ENCODE measurements at regions of chr16 and their contacts with region 1.

Region 1: GRCh38 chr16:4200000-4200780 is 41.7 kb downstream of the SRL start:
- DNase-seq: peak; percentile 73 to 88
- H3K4me3 ChIP-seq: no peak overlapping the region
- H3K27ac ChIP-seq: no peak overlapping the region
- H3K4me1 ChIP-seq: peaks cover 7% of the 10 kb centered on the region
- H3K27me3 ChIP-seq: no peaks in the 10 kb centered on the region
- CTCF ChIP-seq: peak; percentile 70

Region 2: DNA sequence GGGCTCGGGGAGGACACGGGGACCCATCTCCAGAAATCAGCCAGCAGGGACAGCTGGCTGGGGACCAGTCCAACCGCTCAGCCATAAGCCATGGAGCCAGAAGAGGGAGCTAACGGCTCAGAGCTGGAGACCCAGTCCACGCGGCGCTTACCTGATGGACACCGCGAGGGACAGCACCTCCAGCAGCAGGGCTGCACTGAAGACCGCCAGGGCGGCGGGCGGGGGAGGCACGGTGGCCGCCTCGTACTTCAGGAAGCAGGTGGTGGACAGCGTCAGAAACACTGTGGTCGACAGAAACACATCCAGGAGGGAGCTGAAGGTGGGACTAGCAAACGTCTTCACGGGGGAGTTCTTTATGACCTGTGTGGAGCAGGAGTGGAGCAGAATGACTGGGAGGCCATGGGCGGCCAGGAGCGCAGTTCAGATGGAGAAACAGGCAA is 217.1 kb before region 1 on chr16:
- CTCF ChIA-PET with region 1: interaction called, 7 read pairs
- POLR2A ChIA-PET with region 1: interaction called, 3 read pairs
- intact Hi-C with region 1: loop called (anchors 5 kb)
- DNase-seq: peak; percentile 64 to 91
- H3K4me3 ChIP-seq: no peak overlapping the region
- H3K27ac ChIP-seq: no peak overlapping the region
- H3K4me1 ChIP-seq: no peaks in the 10 kb centered on the region
- H3K27me3 ChIP-seq: no peaks in the 10 kb centered on the region
- CTCF ChIP-seq: peak; percentile 82

Region 3: GRCh38 chr16:4159726-4160125 is 40.5 kb before region 1 on chr16:
- CTCF ChIA-PET with region 1: no interaction called
- POLR2A ChIA-PET with region 1: no interaction called
- intact Hi-C with region 1: no loop called
- DNase-seq: no peak
- H3K4me3 ChIP-seq: no peak overlapping the region
- H3K27ac ChIP-seq: no peak overlapping the region
- H3K4me1 ChIP-seq: no peaks in the 10 kb centered on the region
- H3K27me3 ChIP-seq: 0 out of 2 replicates have a peak, but pooled peaks cover 6% of the 10 kb centered on the region
- CTCF ChIP-seq: no peak

Region 4: GRCh38 chr16:4214215-4214621 is 14.0 kb after region 1 on chr16:
- CTCF ChIA-PET with region 1: interaction called, 10 read pairs
- POLR2A ChIA-PET with region 1: no interaction called
- intact Hi-C with region 1: no loop called
- DNase-seq: peak; percentile 52 to 93
- H3K4me3 ChIP-seq: no peak overlapping the region
- H3K27ac ChIP-seq: peak overlapping the region; percentile 72
- H3K4me1 ChIP-seq: peaks cover 23% of the 10 kb centered on the region
- H3K27me3 ChIP-seq: no peaks in the 10 kb centered on the region
- CTCF ChIP-seq: no peak

Region 5: DNA sequence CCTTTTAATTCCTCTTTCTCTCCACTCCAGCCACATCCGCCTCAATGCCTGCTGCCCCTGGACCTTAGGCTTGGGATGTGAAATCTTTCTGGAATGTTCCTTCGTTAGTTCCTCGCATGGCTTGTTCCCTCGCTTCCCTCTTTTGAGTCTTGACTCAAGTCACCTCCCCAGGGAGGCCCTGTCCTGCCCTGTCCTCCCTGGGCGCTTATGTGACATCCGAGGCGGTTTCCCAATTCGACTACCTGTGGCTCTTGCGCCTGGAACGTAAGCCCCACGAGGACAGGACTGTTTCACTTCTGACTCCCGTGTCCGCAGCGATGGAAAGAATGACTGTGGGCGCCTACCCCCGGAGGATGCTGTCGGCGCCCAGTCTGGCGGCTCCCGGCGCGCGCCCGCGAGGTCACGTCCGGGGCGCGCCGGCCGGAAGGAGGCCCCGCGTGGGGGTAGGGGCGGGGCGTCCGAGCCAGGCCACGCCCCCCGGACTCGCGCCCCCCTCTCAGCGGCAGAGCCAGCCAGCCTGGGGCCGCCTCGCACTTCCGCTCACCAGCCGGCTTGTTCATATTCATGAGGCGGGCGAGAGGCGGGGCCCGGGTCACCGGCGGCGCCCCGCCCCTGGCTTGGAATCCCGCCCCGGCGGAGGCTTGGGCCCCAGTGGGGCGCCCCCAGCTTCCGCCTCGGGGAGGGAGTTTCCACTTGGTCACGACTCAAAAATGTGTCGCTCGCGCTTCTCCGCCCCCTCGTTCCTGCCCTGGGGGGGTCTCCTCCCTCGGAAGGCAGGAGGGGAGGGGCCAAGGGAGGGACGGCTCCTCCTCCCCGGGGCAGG is 107.2 kb after region 1 on chr16:
- CTCF ChIA-PET with region 1: no interaction called
- POLR2A ChIA-PET with region 1: no interaction called
- intact Hi-C with region 1: no loop called
- DNase-seq: peak; percentile 86 to 99
- H3K4me3 ChIP-seq: peak overlapping the region; percentile 87
- H3K27ac ChIP-seq: peak overlapping the region; percentile 26; the same call in 1 of the 2 replicates
- H3K4me1 ChIP-seq: peaks cover 26% of the 10 kb centered on the region
- H3K27me3 ChIP-seq: no peaks in the 10 kb centered on the region
- CTCF ChIP-seq: no peak

Region 6: GRCh38 chr16:4330277-4330874 is 130.2 kb after region 1 on chr16:
- CTCF ChIA-PET with region 1: interaction called, 5 read pairs
- POLR2A ChIA-PET with region 1: no interaction called
- intact Hi-C with region 1: loop called (anchors 1 kb)
- DNase-seq: peak in 1 of 2 experiments; percentile 85
- H3K4me3 ChIP-seq: no peak overlapping the region
- H3K27ac ChIP-seq: no peak overlapping the region
- H3K4me1 ChIP-seq: no peaks in the 10 kb centered on the region
- H3K27me3 ChIP-seq: no peaks in the 10 kb centered on the region
- CTCF ChIP-seq: peak; percentile 96

Region 7: GRCh38 chr16:4586291-4586690 is 386.1 kb after region 1 on chr16:
- CTCF ChIA-PET with region 1: interaction called, 3 read pairs
- POLR2A ChIA-PET with region 1: no interaction called
- intact Hi-C with region 1: loop called (anchors 5 kb)
- DNase-seq: no peak
- H3K4me3 ChIP-seq: no peak overlapping the region
- H3K27ac ChIP-seq: no peak overlapping the region
- H3K4me1 ChIP-seq: no peaks in the 10 kb centered on the region
- H3K27me3 ChIP-seq: peaks cover 18% of the 10 kb centered on the region; the same call in 1 of the 2 replicates
- CTCF ChIP-seq: no peak

Measured in PC-9 (cell line).